ENCODE measurements at regions of chr12 and their contacts with region 1.

Region 1: GRCh38 chr12:124906606-124907261 is 7.7 kb downstream of the UBC start:
- H3K4me3 ChIP-seq: no peak overlapping the region
- H3K27ac ChIP-seq: no peak overlapping the region
- H3K4me1 ChIP-seq: peaks cover 7% of the 10 kb centered on the region
- CTCF ChIP-seq: peak; percentile 86

Region 2: GRCh38 chr12:124700810-124701592 is 205.7 kb before region 1 on chr12:
- CTCF ChIA-PET with region 1: no interaction called
- POLR2A ChIA-PET with region 1: no interaction called
- H3K4me3 ChIP-seq: no peak overlapping the region
- H3K27ac ChIP-seq: no peak overlapping the region
- H3K4me1 ChIP-seq: peaks cover 5% of the 10 kb centered on the region; the same call in 1 of the 2 replicates
- CTCF ChIP-seq: no peak

Region 3: DNA sequence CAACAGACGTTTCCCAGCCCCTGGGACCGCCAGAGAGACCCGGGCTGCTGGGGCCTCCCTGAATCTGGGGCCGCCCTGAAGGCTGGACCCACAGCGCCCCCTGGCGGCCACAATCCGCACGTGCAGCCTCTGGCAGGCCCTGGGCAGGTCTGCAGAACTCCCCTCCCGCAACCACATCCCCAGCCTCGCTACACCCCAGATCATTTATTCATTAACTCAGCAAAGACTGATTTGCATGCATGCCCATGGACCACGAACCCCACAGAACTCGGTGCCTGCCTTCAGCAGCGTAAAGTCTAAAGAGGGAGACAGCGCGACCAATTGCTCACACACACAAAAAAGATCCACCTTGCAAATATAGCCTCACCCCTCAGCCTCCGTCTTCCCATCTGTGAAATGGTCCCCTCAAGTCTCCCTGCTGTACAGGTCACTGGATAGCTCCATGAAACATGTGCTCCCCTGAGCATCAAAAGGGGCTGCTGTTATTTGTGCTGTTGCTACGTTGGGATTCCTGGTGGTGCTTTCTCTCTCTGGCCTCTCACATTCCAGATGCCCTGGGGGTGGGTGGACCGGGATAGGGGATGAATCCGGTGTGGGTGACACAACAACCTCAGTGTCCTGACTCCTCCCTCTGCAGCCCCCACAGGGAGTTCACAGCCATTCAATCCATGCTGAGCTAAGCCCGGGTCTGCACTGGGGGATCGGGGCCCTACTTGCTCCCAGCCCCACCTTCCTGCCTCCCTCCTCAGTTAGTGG is 139.5 kb before region 1 on chr12:
- CTCF ChIA-PET with region 1: interaction called, 13 read pairs
- POLR2A ChIA-PET with region 1: no interaction called
- H3K4me3 ChIP-seq: no peak overlapping the region
- H3K27ac ChIP-seq: no peak overlapping the region
- H3K4me1 ChIP-seq: no peaks in the 10 kb centered on the region
- CTCF ChIP-seq: peak; percentile 89

Region 4: DNA sequence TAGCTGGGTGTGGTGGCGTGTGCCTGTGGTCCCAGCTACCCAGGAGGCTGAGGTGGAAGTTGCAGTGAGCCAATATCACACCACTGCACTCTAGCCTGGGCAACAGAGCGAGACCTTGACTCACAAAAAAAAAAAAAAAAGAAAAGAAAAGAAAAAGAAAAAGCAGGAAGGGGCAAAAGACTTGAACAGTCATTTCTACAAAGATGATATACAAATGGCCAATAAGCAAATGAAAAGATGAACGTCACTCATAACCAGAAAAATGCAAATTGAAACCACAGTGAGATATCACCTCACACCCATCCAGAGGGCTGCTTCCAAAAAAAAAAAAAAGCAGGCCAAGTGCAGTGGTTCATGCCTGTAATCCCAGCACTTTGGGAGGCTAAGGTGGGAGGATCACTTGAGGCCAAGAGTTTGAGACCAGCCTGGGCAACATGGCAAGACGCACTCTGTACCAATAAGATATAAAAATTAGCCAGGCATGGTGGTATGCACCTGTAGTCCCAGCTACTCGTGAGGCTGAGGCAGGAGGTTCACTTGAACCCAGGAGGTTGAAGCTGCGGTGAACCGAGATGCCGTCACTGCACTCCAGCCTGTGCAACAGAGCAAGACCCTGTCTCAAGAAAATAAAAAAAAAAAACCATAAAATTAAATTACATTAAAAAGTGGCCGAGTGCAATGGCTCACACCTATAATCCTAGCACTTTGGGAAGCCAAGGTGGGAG is 12.8 kb before region 1 on chr12:
- CTCF ChIA-PET with region 1: interaction called, 15 read pairs
- POLR2A ChIA-PET with region 1: no interaction called
- H3K4me3 ChIP-seq: no peak overlapping the region
- H3K27ac ChIP-seq: no peak overlapping the region
- H3K4me1 ChIP-seq: no peaks in the 10 kb centered on the region
- CTCF ChIP-seq: no peak

Region 5: DNA sequence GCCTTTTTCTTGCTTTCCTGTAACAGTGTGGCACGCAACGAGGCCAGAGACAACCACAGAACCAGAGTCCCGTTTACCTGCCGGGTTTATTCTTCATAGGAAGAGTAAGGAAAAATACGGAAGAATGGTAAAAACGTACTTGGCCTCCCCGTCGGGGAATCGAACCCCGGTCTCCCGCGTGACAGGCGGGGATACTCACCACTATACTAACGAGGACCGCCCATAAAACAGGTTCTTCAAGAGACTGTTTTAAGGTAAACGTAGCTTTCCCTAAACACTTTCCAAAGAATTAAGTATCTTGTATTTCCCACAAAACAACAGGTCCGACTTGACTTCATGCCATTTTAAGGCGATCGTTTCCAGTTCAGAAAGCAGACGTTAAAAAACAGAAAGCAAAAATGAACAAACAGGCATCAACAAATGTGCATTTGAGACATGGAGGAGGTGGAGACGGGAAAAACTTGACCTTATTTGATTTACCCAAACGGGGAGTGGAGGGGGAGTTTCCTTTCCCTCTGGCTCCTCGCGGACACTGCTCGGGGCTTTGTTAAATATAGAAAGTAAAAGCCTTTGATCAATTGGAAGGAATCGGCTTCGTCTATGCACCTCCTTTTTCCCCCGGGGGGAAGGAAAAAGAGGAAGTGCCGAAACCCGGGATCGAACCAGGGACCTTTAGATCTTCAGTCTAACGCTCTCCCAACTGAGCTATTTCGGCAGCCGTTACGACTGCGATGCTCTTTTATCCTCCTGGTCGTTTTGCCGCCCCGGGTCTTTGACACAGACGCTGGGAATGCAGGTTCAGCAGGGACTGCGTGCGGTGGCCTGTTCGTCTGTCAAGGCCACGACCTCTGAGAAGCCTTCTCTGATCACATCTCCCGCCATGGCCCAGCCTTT is 20.7 kb after region 1 on chr12:
- CTCF ChIA-PET with region 1: interaction called, 13 read pairs
- POLR2A ChIA-PET with region 1: interaction called, 4 read pairs
- H3K4me3 ChIP-seq: peak overlapping the region; percentile 71
- H3K27ac ChIP-seq: peak overlapping the region; percentile 72
- H3K4me1 ChIP-seq: no peaks in the 10 kb centered on the region
- CTCF ChIP-seq: no peak

Measured in HEK293 (cell line).